Activated CD4-positive, alpha-beta T cell treated with anti-CD3 and anti-CD28 coated beads, Interleukin-2, amount 10 ng/mL, durations not matched to agents 7 days and 5 days (primary cell): ENCODE measurements at regions of chr19 and their contacts with region 1.

Region 1: GRCh38 chr19:47243776-47244547 is 12.4 kb upstream of the CCDC9 start:
- DNase-seq: peak; percentile 89
- H3K4me3 Mint-ChIP-seq: peak overlapping the region; percentile 71
- H3K27ac Mint-ChIP-seq: peak overlapping the region; percentile 92
- H3K4me1 Mint-ChIP-seq: peaks cover 27% of the 10 kb centered on the region
- H3K27me3 Mint-ChIP-seq: peaks cover 3% of the 10 kb centered on the region

Region 2: GRCh38 chr19:47013041-47013517 is 230.9 kb before region 1 on chr19:
- CTCF ChIA-PET with region 1: interaction called, 13 read pairs
- POLR2A ChIA-PET with region 1: no interaction called
- DNase-seq: peak; percentile 59
- H3K4me3 Mint-ChIP-seq: no peak overlapping the region
- H3K27ac Mint-ChIP-seq: peak overlapping the region; percentile 58
- H3K4me1 Mint-ChIP-seq: peaks cover 9% of the 10 kb centered on the region
- H3K27me3 Mint-ChIP-seq: peaks cover 2% of the 10 kb centered on the region

Region 3: DNA sequence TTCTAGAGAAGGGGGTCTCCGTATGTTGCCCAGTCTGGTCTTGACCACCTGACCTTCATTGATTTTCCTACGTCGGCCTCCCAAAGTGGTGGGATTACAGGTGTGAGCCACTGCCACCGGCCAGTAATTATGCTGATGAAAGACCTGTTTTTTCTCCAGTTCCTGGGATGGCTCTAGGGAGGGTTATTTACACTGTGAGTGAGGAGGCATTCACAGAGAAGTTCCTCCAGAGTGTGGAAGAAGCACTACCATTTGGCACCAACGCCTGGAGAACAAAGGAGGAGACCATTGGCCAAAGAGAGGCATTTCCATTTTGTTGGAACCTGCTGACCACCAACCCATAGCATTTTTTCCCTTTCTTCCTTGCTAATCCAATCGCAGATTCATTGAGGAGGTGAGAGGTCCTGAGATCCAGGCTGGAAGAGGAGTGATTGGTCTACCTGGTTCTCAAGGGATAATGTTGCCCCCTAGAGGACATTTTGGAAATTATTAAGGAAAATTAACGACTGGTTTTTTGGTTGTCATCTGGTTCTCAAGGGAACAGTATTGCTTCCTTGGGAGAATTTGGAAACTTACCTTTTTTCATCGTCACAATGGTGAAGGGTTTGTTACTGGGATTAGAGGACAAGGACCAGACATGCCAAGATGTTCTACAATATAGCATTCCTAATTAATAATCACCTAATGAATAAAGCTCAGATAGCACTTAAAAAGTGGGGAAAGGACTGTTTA is 118.9 kb before region 1 on chr19:
- CTCF ChIA-PET with region 1: interaction called, 12 read pairs
- POLR2A ChIA-PET with region 1: no interaction called
- DNase-seq: no peak
- H3K4me3 Mint-ChIP-seq: no peak overlapping the region
- H3K27ac Mint-ChIP-seq: no peak overlapping the region
- H3K4me1 Mint-ChIP-seq: peaks cover 7% of the 10 kb centered on the region
- H3K27me3 Mint-ChIP-seq: peaks cover 2% of the 10 kb centered on the region

Region 4: DNA sequence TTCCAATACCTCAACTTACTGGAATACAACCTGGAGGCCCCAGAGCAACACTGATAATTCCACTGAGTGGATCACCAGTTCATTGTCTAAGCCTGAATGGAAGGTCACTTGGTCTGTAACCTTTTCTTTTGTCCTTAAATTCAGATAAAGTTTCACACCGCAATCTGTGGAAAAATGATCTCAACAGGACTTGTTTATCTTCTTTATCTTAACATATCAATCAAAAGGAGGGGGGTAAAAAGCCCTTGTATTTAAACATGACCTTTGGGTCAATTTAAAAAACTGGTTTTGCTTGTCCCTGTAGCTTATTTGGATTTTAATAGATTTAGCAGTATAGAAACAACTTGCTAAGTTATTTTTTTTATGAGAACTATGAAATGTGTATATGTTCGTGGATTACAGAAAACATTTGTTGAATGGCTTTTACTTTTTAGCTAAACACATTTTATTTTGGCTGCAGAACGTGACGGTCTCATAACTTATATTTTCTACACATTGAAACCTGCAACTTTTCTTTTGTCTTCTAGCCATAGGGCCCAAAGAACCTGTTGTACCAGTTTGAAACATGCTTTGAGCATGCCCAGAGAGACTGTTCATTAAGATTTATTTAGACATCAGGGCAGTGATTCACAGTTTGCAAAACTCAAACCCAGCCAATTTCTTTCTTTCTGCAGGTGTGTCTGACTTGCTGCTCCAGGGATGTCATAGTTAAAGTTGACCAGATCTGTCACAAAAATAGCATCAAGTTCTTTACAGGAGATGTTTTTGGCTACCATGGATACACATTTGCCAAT is 91.5 kb before region 1 on chr19:
- CTCF ChIA-PET with region 1: interaction called, 70 read pairs
- POLR2A ChIA-PET with region 1: interaction called, 3 read pairs
- DNase-seq: no peak
- H3K4me3 Mint-ChIP-seq: no peak overlapping the region
- H3K27ac Mint-ChIP-seq: no peak overlapping the region
- H3K4me1 Mint-ChIP-seq: peaks cover 57% of the 10 kb centered on the region
- H3K27me3 Mint-ChIP-seq: no peaks in the 10 kb centered on the region

Region 5: GRCh38 chr19:47200530-47200929 is 43.4 kb before region 1 on chr19:
- CTCF ChIA-PET with region 1: interaction called, 14 read pairs
- POLR2A ChIA-PET with region 1: no interaction called
- DNase-seq: no peak
- H3K4me3 Mint-ChIP-seq: no peak overlapping the region
- H3K27ac Mint-ChIP-seq: no peak overlapping the region
- H3K4me1 Mint-ChIP-seq: peaks cover 11% of the 10 kb centered on the region
- H3K27me3 Mint-ChIP-seq: no peaks in the 10 kb centered on the region

Region 6: GRCh38 chr19:47231215-47231984 is 12.6 kb before region 1 on chr19:
- CTCF ChIA-PET with region 1: interaction called, 78 read pairs
- POLR2A ChIA-PET with region 1: interaction called, 5 read pairs
- DNase-seq: peak; percentile 92
- H3K4me3 Mint-ChIP-seq: peak overlapping the region; percentile 72
- H3K27ac Mint-ChIP-seq: peak overlapping the region; percentile 89
- H3K4me1 Mint-ChIP-seq: peaks cover 32% of the 10 kb centered on the region
- H3K27me3 Mint-ChIP-seq: peaks cover 3% of the 10 kb centered on the region